Calu3 (cell line): ENCODE measurements at regions of chr9 and their contacts with region 1.

Region 1: GRCh38 chr9:74952281-74953151 is at the start of gene C9orf40:
- DNase-seq: peak; percentile 90
- H3K4me3 Mint-ChIP-seq: peak within 1 kb of the TSS; percentile 82
- H3K27ac Mint-ChIP-seq: peak within 1 kb of the TSS; percentile 62
- H3K4me1 Mint-ChIP-seq: no peaks in the 10 kb centered on the region
- H3K27me3 Mint-ChIP-seq: no peaks in the 10 kb centered on the region
- CTCF ChIP-seq: peak; percentile 56
- total RNA-seq, gene C9orf40: 3.4 TPM in 2 replicates

Region 2: GRCh38 chr9:74458832-74459231 is 493.7 kb before region 1 on chr9:
- CTCF ChIA-PET with region 1: no interaction called
- intact Hi-C with region 1: no loop called
- DNase-seq: no peak
- H3K4me3 Mint-ChIP-seq: no peak overlapping the region
- H3K27ac Mint-ChIP-seq: no peak overlapping the region
- H3K4me1 Mint-ChIP-seq: no peaks in the 10 kb centered on the region
- H3K27me3 Mint-ChIP-seq: no peaks in the 10 kb centered on the region
- CTCF ChIP-seq: no peak

Region 3: DNA sequence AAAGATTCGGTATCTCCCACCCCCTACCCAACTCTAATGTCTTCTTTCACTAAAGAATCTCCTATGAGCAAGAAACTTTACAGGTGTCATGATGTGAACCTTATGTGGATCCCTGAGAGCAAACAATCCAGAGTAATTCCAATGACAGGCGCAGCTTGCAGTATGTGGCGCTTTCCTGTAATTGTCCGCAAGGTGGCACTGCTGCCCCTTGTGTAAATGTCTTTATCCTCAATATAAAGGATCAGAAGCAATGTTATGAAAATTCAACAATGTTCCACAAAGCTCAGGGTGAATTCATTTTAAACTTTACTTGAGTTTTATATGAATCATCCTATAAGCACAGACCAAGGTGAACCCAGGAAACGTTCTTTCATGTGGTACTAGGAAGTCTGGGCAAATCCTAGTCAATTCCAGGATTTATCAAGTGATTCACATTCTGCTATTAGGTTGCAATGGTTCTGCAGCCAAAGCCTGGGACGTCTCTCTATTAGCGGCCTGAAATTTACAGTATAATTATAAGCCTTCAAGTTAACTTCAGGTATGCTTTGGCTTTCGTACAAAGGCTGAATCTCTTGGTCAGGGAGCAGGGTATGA is 178.5 kb before region 1 on chr9:
- CTCF ChIA-PET with region 1: no interaction called
- intact Hi-C with region 1: loop called (anchors 2 kb)
- DNase-seq: peak; percentile 51
- H3K4me3 Mint-ChIP-seq: no peak overlapping the region
- H3K27ac Mint-ChIP-seq: no peak overlapping the region
- H3K4me1 Mint-ChIP-seq: no peaks in the 10 kb centered on the region
- H3K27me3 Mint-ChIP-seq: peaks cover 27% of the 10 kb centered on the region
- CTCF ChIP-seq: peak; percentile 48

Region 4: GRCh38 chr9:74979844-74980243 is 27.3 kb after region 1 on chr9:
- CTCF ChIA-PET with region 1: no interaction called
- intact Hi-C with region 1: loop called (anchors 1 kb)
- DNase-seq: no peak
- H3K4me3 Mint-ChIP-seq: no peak overlapping the region
- H3K27ac Mint-ChIP-seq: no peak overlapping the region
- H3K4me1 Mint-ChIP-seq: no peaks in the 10 kb centered on the region
- H3K27me3 Mint-ChIP-seq: no peaks in the 10 kb centered on the region
- CTCF ChIP-seq: no peak

Region 5: GRCh38 chr9:75001719-75002422 is 49.4 kb after region 1 on chr9:
- CTCF ChIA-PET with region 1: no interaction called
- intact Hi-C with region 1: no loop called
- DNase-seq: peak; percentile 4
- H3K4me3 Mint-ChIP-seq: no peak overlapping the region
- H3K27ac Mint-ChIP-seq: no peak overlapping the region
- H3K4me1 Mint-ChIP-seq: no peaks in the 10 kb centered on the region
- H3K27me3 Mint-ChIP-seq: no peaks in the 10 kb centered on the region
- CTCF ChIP-seq: peak; percentile 60

Region 6: GRCh38 chr9:75027187-75028107 is 74.9 kb after region 1 on chr9:
- CTCF ChIA-PET with region 1: no interaction called
- intact Hi-C with region 1: loop called (anchors 5 kb)
- DNase-seq: peak; percentile 37
- H3K4me3 Mint-ChIP-seq: peak overlapping the region; percentile 67
- H3K27ac Mint-ChIP-seq: peak overlapping the region; percentile 47
- H3K4me1 Mint-ChIP-seq: no peaks in the 10 kb centered on the region
- H3K27me3 Mint-ChIP-seq: no peaks in the 10 kb centered on the region
- CTCF ChIP-seq: no peak